T-cell (primary cell): ENCODE measurements at regions of chr11 and their contacts with region 1.

Region 1: DNA sequence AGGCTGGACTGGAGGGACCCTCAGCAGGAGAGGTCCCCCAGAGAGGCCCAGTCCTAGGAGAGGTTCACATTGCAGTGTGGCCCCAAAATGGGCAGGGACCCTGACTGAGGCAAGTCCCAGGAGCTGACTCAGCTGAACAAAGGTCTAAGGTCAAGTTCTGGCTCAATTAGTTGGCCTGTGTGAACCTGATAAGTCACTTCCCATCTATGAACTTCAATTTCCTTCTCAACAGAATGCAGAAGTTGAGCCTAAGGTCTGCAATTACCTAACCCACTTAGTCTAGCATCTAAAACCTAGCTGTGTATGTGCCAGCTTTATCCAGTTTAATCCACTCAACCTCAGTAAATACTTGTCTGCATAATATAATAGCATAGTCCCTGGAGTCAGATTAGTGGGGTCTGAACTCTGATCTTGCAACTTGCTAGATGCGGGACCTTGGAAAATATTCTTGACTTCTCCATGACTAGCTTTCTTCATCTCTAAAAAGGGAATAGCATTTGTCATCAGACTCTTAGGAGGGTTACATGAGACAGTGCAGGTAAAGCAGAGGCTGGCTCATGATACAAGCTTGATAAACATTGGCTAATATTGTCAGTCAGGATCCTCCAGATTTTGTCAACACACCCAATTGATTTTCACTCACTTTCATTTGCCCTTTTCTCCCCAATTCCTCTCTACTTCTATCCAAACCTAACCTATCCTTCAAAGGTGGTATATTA is 465.5 kb downstream of the INSC start:
- DNase-seq: no peak
- ATAC-seq: no peak
- H3K4me3 ChIP-seq: no peak overlapping the region
- H3K4me3 Mint-ChIP-seq: no peak overlapping the region
- H3K27ac ChIP-seq: no peak overlapping the region
- H3K27ac Mint-ChIP-seq: no peak overlapping the region
- H3K4me1 ChIP-seq: no peaks in the 10 kb centered on the region
- H3K4me1 Mint-ChIP-seq: no peaks in the 10 kb centered on the region
- H3K27me3 ChIP-seq: peaks cover 0 to 10% of the 10 kb centered on the region in 2 experiments
- H3K27me3 Mint-ChIP-seq: peaks cover 0 to 4% of the 10 kb centered on the region in 2 donors

Region 2: GRCh38 chr11:15291885-15292284 is 288.3 kb before region 1 on chr11:
- CTCF ChIA-PET with region 1: no interaction called
- POLR2A ChIA-PET with region 1: no interaction called
- DNase-seq: no peak
- ATAC-seq: no peak
- H3K4me3 ChIP-seq: no peak overlapping the region
- H3K4me3 Mint-ChIP-seq: no peak overlapping the region
- H3K27ac ChIP-seq: no peak overlapping the region
- H3K27ac Mint-ChIP-seq: no peak overlapping the region
- H3K4me1 ChIP-seq: no peaks in the 10 kb centered on the region
- H3K4me1 Mint-ChIP-seq: no peaks in the 10 kb centered on the region
- H3K27me3 ChIP-seq: peaks cover 0 to 9% of the 10 kb centered on the region in 2 experiments
- H3K27me3 Mint-ChIP-seq: peaks cover 2 to 4% of the 10 kb centered on the region in 2 donors

Region 3: GRCh38 chr11:16297332-16297731 is 717.1 kb after region 1 on chr11:
- CTCF ChIA-PET with region 1: no interaction called
- POLR2A ChIA-PET with region 1: interaction called in 1 of 2 experiments, 11 read pairs
- DNase-seq: no peak
- ATAC-seq: no peak
- H3K4me3 ChIP-seq: no peak overlapping the region
- H3K4me3 Mint-ChIP-seq: no peak overlapping the region
- H3K27ac ChIP-seq: no peak overlapping the region
- H3K27ac Mint-ChIP-seq: no peak overlapping the region
- H3K4me1 ChIP-seq: no peaks in the 10 kb centered on the region
- H3K4me1 Mint-ChIP-seq: no peaks in the 10 kb centered on the region
- H3K27me3 ChIP-seq: no peaks in the 10 kb centered on the region
- H3K27me3 Mint-ChIP-seq: no peaks in the 10 kb centered on the region